ENCODE measurements at regions of chr2 and their contacts with region 1.

Region 1: DNA sequence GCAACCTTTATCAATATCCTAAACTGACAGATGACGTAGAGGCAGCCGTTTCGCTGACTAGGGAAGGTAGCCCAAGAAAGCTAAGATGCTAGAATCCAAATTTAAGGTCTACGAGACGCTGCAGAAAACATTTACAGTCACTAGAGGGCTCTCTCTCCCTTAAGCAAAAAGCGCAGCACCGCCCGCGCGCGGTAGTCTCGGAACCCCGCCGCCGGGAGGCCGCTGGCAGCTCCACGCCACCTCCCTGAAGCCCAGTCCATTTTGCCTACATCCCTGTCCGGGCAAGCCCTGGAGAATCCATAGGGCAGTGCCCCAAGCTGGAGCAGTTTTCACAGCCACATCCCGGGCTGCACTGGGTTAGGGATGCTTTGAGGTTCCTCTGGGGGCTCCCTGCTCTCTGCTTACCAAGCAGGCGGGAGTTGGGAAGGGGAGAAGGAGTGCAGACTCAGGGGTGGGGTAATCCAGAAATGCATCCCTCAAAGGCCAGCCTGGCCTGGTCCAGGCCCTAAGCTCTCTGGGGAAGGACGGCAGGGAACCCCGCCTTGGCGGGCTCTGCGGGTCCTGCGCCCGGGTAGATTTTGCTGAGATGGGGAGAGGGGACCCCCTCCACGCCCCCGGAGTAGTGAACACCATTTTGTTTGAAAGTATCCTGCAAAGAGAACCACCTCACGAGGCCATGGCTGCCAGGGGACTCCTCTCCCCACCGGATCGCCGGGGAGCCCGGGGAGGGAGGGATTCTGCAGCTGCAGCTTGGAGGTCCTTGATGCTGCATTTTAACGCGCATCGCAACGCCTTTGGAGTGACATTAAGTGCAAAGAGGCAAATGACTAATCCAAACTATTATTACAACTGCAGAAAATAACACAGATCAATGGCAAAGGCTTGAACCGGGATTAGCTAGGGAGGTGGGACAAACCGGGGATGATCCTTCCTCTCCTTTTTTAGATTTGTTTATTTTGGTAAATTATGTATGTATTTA is 1.3 kb upstream of the DPYSL5 start:
- DNase-seq: peak in 1 of 2 experiments; percentile 86
- H3K4me3 ChIP-seq: peak overlapping the region; percentile 54 to 91 (median 70); a peak in 7 of 8 replicates
- H3K27ac ChIP-seq: no peak overlapping the region
- H3K4me1 ChIP-seq: peaks cover 0 to 22% (median 8%) of the 10 kb centered on the region in 4 experiments; a peak in 4 of 7 replicates
- H3K27me3 ChIP-seq: peaks cover 30 to 61% (median 48%) of the 10 kb centered on the region in 4 experiments
- CTCF ChIP-seq: peak; percentile 48 to 96 (median 82)
- EP300 ChIP-seq: no peak
- POLR2A ChIP-seq: no peak
- RAD21 ChIP-seq: peak; percentile 89 to 94

Region 2: DNA sequence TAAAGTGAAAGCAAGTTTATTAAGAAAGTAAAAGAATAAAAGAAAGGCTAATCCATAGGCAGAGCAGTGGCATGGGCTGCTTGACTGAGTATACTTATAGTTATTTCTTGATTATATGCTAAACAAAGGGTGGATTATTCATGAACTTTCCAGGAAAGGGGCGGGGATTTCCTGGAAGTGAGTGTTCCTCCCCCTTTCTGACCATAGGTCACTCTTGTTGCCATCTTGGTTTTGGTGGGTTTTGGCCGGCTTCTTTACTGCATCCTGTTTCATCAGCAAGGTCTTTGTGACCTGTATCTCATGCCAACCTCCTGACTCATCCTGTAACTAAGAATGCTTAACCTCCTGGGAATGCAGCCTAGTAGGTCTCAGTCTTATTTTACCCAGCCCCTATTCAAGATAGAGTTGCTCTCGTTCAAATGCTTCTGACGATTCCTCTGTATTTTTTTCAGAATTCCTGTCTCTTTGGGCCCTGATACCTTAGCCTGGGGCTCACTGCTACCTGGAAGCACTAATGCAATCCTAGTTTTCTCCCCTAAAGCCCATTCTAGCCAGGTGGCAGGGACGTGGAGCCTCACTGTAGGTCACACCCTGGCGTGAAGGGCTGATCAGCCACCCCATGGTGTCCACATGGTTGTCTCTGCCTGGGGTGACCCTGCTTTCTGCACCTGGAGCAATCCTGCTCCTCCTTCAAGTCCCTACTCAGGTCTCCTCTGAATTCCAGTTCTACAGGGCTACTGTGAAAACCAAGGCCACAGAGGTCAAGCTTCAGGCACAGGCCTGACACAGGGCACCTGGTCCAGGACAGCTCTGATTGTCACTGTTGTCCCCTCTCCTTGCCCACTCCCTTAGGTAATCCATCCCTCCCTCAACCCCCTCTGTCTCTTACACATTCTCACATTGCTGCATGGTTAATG is 88.5 kb before region 1 on chr2:
- CTCF ChIA-PET with region 1: no interaction called
- POLR2A ChIA-PET with region 1: no interaction called
- DNase-seq: no peak
- H3K4me3 ChIP-seq: 0 out of 8 replicates have a peak overlapping the region, but pooled peaks of 1 of the 4 experiments have one; percentile 8
- H3K27ac ChIP-seq: peak overlapping the region; percentile 75
- H3K4me1 ChIP-seq: peaks cover 9 to 19% (median 11%) of the 10 kb centered on the region in 4 experiments
- H3K27me3 ChIP-seq: peaks cover 0 to 3% (median under 1%) of the 10 kb centered on the region in 4 experiments; a peak in 2 of 7 replicates
- CTCF ChIP-seq: no peak
- EP300 ChIP-seq: peak in 1 of 2 experiments; percentile 75; a peak in 1 of 3 replicates
- POLR2A ChIP-seq: no peak
- RAD21 ChIP-seq: no peak

Region 3: GRCh38 chr2:26861610-26862224 is 15.1 kb after region 1 on chr2:
- CTCF ChIA-PET with region 1: interaction called, 16 read pairs
- POLR2A ChIA-PET with region 1: interaction called, 4 read pairs
- DNase-seq: peak in 1 of 2 experiments; percentile 4
- H3K4me3 ChIP-seq: no peak overlapping the region
- H3K27ac ChIP-seq: no peak overlapping the region
- H3K4me1 ChIP-seq: no peaks in the 10 kb centered on the region
- H3K27me3 ChIP-seq: peaks cover 0 to 2% (median 0%) of the 10 kb centered on the region in 4 experiments; a peak in 1 of 7 replicates
- CTCF ChIP-seq: no peak
- EP300 ChIP-seq: no peak
- POLR2A ChIP-seq: no peak
- RAD21 ChIP-seq: no peak

Region 4: DNA sequence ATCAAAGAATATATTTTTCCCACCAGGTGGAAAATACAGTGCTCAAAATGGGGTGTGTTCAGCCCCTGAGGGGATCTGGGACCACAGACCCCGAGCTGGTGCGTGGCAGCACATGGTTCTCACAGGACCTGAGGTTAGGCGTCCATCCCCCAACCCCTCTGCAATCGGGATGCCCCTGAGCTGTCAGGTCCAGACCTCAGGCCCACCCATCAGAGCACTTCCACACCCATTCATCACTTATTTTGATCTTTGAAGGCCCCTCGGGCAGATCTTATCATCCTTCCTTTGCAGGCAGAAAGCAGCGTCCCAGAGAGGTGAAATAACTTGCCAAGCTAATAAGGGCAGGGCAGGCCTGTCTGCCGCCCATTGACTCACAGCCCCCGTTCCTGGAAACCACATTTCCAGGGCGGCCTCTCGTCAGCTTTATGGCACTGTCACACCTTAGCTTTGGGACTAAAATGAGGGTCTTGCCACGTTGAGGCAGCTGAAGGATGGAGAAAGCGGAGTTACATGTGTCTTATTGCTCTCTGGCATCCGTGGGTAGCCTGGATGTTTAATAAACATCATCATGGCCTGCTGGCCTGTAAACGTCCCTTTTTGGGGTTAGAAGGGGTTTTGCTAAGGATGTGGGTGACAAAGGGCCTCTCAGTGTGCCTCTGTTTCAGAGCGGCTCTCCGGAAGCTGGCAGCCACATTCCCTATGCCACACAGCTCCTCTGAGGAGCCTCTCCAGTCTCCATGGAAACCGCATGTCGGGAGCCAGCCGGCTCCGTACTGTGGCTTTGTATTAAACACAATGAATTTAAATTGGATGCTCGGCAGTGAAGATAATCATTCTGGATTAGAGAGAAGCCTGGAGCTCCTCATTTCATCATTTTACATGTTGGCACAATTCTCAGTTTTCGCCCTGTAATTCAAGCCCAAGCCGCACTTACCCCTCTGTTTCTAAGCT is 65.6 kb after region 1 on chr2:
- CTCF ChIA-PET with region 1: interaction called, 14 read pairs
- POLR2A ChIA-PET with region 1: interaction called, 4 read pairs
- DNase-seq: peak in 1 of 2 experiments; percentile 62
- H3K4me3 ChIP-seq: peak overlapping the region in 2 of 4 experiments; percentile 13 to 48; a peak in 3 of 8 replicates
- H3K27ac ChIP-seq: no peak overlapping the region
- H3K4me1 ChIP-seq: peaks cover 10 to 30% (median 20%) of the 10 kb centered on the region in 4 experiments
- H3K27me3 ChIP-seq: no peaks in the 10 kb centered on the region; a peak in 1 of 7 replicates
- CTCF ChIP-seq: no peak
- EP300 ChIP-seq: no peak
- POLR2A ChIP-seq: no peak
- RAD21 ChIP-seq: no peak

Region 5: DNA sequence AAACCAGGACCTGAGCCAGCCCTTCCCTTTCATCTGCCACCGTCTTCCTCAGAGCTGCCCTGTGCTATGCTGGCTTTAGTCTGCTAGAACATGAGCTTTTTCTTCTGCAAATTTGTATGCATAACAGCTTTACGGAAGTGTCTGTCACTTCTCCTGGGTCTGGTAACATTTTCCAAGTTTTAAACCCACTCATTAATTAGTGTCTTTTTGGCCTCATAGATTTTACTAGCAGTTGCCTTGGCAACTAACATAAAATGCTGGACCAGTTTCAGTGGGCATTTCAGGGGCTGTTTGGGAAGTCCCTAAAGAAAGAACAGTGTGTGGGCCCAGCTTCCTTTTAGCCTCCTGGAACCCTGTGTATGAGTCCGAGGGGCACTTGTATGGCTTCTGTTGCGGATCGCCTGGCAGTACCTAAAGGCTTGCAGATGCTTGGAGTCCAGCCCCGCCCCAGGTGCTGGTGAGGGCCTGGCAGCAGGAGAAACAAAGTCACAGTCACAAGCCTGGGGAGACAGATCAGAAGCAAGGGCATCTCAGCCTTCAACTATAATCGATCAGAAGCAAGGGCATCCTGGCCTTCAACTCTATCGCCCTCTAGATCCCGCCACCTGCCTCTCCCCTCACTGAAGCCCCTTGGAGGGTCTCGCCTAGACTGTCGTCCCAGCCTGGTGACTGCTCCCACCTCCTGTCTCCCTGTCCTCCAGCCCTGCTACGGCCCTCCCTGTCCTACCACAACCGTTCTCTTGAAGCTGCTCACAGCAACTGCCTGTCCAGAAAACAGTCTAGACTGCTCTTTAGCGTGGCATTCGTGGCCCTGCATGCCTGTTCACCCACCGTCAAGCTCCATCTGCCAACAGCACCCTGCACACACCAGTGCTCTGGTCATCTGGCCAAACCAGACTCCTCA is 87.1 kb after region 1 on chr2:
- CTCF ChIA-PET with region 1: interaction called, 235 read pairs
- POLR2A ChIA-PET with region 1: no interaction called
- DNase-seq: no peak
- H3K4me3 ChIP-seq: no peak overlapping the region
- H3K27ac ChIP-seq: no peak overlapping the region
- H3K4me1 ChIP-seq: peaks cover 0 to 4% (median 1%) of the 10 kb centered on the region in 4 experiments; a peak in 4 of 7 replicates
- H3K27me3 ChIP-seq: no peaks in the 10 kb centered on the region; a peak in 2 of 7 replicates
- CTCF ChIP-seq: peak in 1 of 3 experiments; percentile 15; a peak in 1 of 4 replicates
- EP300 ChIP-seq: no peak
- POLR2A ChIP-seq: no peak
- RAD21 ChIP-seq: no peak; a peak in 1 of 4 replicates

Region 6: GRCh38 chr2:26959331-26959730 is 112.7 kb after region 1 on chr2:
- CTCF ChIA-PET with region 1: interaction called, 37 read pairs
- POLR2A ChIA-PET with region 1: no interaction called
- DNase-seq: no peak
- H3K4me3 ChIP-seq: no peak overlapping the region
- H3K27ac ChIP-seq: no peak overlapping the region
- H3K4me1 ChIP-seq: peaks cover 0 to 2% (median 0%) of the 10 kb centered on the region in 4 experiments; a peak in 1 of 7 replicates
- H3K27me3 ChIP-seq: no peaks in the 10 kb centered on the region; a peak in 1 of 7 replicates
- CTCF ChIP-seq: no peak
- EP300 ChIP-seq: no peak
- POLR2A ChIP-seq: no peak
- RAD21 ChIP-seq: no peak

Region 7: DNA sequence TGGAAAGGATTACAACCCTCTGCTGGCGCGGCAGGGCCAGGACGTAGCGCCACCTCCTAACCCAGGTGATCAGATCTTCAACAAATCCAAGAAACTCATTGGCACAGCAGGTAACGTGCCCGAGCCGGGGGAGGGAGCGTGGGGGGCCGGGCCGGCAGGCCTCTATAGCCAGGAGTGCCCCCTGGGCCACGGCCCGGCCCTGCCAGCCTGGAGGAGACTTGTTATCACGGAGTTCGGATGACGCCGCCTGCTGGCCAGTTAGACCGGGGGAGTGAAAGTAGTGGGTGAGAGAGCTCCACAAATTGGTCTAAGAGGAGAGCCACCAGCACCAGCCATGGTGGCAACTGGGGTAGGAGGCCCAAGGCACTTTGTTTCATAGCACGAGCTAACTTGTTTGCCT is 177.6 kb after region 1 on chr2:
- CTCF ChIA-PET with region 1: interaction called, 94 read pairs
- POLR2A ChIA-PET with region 1: no interaction called
- DNase-seq: peak; percentile 47 to 87
- H3K4me3 ChIP-seq: no peak overlapping the region
- H3K27ac ChIP-seq: no peak overlapping the region
- H3K4me1 ChIP-seq: peaks cover 0 to 4% (median under 1%) of the 10 kb centered on the region in 4 experiments; a peak in 1 of 7 replicates
- H3K27me3 ChIP-seq: no peaks in the 10 kb centered on the region; a peak in 1 of 7 replicates
- CTCF ChIP-seq: peak; percentile 79 to 81 (median 79)
- EP300 ChIP-seq: no peak
- POLR2A ChIP-seq: no peak
- RAD21 ChIP-seq: peak; percentile 52 to 63